Caco-2 (cell line): ENCODE measurements at regions of chr5 and their contacts with region 1.

Region 1: DNA sequence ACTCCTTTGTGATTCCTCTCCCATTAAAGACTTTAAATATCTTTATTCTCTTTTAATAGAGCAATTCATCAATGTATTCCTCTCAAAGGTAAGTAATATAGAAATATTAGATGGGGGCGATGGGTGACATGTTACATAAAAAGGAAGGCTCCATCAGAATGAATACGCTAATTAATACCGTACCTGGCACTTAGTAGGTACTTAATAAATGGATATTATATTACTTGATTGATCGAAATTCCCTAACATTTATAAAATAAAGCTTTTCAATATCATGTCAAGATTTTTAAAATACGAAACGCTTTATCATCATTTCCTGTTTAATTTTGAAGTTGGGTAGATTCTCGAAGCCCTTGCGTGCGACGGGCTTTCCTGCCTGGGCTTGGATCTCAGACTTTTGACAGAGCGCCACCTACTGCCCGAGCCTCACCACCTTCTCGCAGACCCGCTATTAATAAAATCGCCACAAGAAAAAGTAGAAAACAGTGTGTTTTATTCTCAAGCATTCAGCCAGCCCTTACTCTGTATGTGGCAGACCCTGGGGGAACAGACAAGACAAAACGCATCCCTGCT is 99.4 kb downstream of the C5orf15 start:
- DNase-seq: peak in 1 of 2 experiments; percentile 71
- H3K4me3 ChIP-seq: no peak overlapping the region
- H3K4me3 Mint-ChIP-seq: no peak overlapping the region
- H3K27ac Mint-ChIP-seq: no peak overlapping the region
- H3K4me1 ChIP-seq: no peaks in the 10 kb centered on the region
- H3K4me1 Mint-ChIP-seq: no peaks in the 10 kb centered on the region
- H3K27me3 ChIP-seq: peaks cover 3% of the 10 kb centered on the region; the same call in 1 of the 2 replicates
- H3K27me3 Mint-ChIP-seq: peaks cover 9% of the 10 kb centered on the region
- CTCF ChIP-seq: peak; percentile 64 to 85

Region 2: GRCh38 chr5:133423618-133424282 is 445.3 kb before region 1 on chr5:
- CTCF ChIA-PET with region 1: interaction called, 4 read pairs
- POLR2A ChIA-PET with region 1: no interaction called
- intact Hi-C with region 1: loop called (anchors 1 kb)
- DNase-seq: peak; percentile 73 to 87
- H3K4me3 ChIP-seq: no peak overlapping the region
- H3K4me3 Mint-ChIP-seq: peak overlapping the region; percentile 17
- H3K27ac Mint-ChIP-seq: no peak overlapping the region
- H3K4me1 ChIP-seq: 0 out of 2 replicates have a peak, but pooled peaks cover 6% of the 10 kb centered on the region
- H3K4me1 Mint-ChIP-seq: peaks cover 9% of the 10 kb centered on the region
- H3K27me3 ChIP-seq: no peaks in the 10 kb centered on the region
- H3K27me3 Mint-ChIP-seq: peaks cover 8% of the 10 kb centered on the region
- CTCF ChIP-seq: peak; percentile 91 to 94

Region 3: GRCh38 chr5:133489632-133490031 is 379.4 kb before region 1 on chr5:
- CTCF ChIA-PET with region 1: interaction called, 4 read pairs
- POLR2A ChIA-PET with region 1: no interaction called
- intact Hi-C with region 1: loop called (anchors 5 kb)
- DNase-seq: peak in 1 of 2 experiments; percentile 41
- H3K4me3 ChIP-seq: no peak overlapping the region
- H3K4me3 Mint-ChIP-seq: no peak overlapping the region
- H3K27ac Mint-ChIP-seq: no peak overlapping the region
- H3K4me1 ChIP-seq: no peaks in the 10 kb centered on the region
- H3K4me1 Mint-ChIP-seq: no peaks in the 10 kb centered on the region
- H3K27me3 ChIP-seq: no peaks in the 10 kb centered on the region
- H3K27me3 Mint-ChIP-seq: peaks cover 7% of the 10 kb centered on the region
- CTCF ChIP-seq: peak; percentile 23 to 45

Region 4: DNA sequence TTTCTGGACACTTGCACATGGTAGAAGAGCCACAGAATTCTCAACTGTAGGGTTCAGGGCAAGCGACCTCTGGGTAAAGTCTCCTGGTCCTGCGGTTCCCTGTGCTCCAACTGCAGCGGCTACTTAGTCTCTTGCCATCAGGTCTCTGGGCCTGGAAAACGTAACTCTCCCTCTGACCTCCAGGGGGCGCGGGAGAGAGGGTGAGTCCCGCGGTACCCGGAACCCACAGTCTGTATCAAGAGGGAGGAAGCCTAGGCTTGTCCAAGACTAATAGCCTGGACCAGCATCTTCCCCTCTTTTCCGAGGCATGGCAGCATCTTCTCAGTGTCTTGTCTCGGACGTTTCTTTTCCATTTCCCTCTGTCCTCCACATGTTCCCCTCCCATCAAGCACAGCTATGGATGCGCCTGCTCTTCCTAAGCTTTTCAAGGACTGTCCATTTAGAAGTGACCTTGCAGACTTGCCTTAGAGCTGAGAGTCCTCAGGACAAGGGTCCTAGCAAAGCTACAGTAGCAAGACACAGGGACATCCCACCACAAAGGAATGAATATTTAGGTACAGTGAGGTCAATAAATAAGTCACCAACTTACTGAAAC is 316.0 kb before region 1 on chr5:
- CTCF ChIA-PET with region 1: no interaction called
- POLR2A ChIA-PET with region 1: no interaction called
- intact Hi-C with region 1: loop called (anchors 1 kb)
- DNase-seq: peak; percentile 62 to 74
- H3K4me3 ChIP-seq: no peak overlapping the region
- H3K4me3 Mint-ChIP-seq: no peak overlapping the region
- H3K27ac Mint-ChIP-seq: no peak overlapping the region
- H3K4me1 ChIP-seq: no peaks in the 10 kb centered on the region
- H3K4me1 Mint-ChIP-seq: no peaks in the 10 kb centered on the region
- H3K27me3 ChIP-seq: no peaks in the 10 kb centered on the region; the same call in 1 of the 2 replicates
- H3K27me3 Mint-ChIP-seq: peaks cover 12% of the 10 kb centered on the region
- CTCF ChIP-seq: peak; percentile 78 to 79

Region 5: DNA sequence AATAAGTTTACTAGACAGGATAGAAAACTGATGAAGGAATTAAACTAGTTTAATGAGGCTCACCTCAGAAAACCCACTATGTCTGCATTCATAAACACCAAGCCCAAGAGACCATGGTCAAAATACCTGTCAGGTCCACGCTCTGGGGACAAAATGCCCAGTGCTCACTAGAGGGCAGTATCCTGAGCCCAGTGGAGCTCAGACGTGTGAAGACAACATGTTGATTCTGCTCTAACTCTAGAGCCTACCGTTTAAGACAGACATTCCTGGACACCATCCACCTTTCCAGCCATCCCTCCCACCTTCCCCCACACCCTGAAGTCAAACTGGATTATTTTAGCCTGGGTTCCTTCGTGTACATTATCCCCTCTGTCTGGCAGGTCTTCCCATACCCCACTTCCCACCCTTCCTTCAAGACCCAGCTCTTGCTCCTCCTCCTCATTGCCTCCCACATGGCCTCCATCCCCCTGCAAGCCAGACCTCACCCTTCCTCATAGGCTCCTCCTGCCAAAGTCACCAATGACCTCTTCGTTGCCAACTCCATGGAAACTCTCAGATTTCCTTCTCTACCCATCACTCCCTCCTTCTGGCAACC is 114.4 kb before region 1 on chr5:
- CTCF ChIA-PET with region 1: interaction called, 6 read pairs
- POLR2A ChIA-PET with region 1: no interaction called
- intact Hi-C with region 1: loop called (anchors 2 kb)
- DNase-seq: peak; percentile 51 to 54
- H3K4me3 ChIP-seq: no peak overlapping the region
- H3K4me3 Mint-ChIP-seq: no peak overlapping the region
- H3K27ac Mint-ChIP-seq: no peak overlapping the region
- H3K4me1 ChIP-seq: no peaks in the 10 kb centered on the region
- H3K4me1 Mint-ChIP-seq: no peaks in the 10 kb centered on the region
- H3K27me3 ChIP-seq: no peaks in the 10 kb centered on the region; the same call in 1 of the 2 replicates
- H3K27me3 Mint-ChIP-seq: peaks cover 9% of the 10 kb centered on the region
- CTCF ChIP-seq: peak; percentile 39 to 73